Activated CD4-positive, alpha-beta T cell treated with anti-CD3 and anti-CD28 coated beads for 36 hours (primary cell): ENCODE measurements at regions of chr17 and their contacts with region 1.

Region 1: DNA sequence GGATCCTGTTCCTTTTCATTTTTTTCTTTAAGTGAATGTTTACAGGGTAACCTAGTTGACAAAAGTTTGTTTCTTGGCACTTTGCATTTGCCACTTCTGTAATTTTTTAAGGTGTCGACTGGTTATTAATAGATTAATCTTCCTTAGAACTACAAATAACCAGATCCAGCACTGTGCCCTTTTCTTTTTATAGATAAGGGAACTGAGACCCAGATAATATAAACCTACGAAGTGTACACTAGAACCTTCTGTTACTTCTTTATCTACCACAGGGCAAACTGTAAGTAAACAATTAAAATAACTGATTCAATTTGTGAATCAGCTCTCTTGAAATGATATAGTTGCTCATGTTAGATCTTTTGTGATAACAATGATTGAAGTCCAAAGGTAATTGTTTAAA is 55.4 kb downstream of the NLK start:
- DNase-seq: no peak
- ATAC-seq: no peak
- H3K4me3 Mint-ChIP-seq: no peak overlapping the region
- H3K27ac Mint-ChIP-seq: no peak overlapping the region
- H3K4me1 Mint-ChIP-seq: no peaks in the 10 kb centered on the region
- H3K27me3 Mint-ChIP-seq: no peaks in the 10 kb centered on the region

Region 2: DNA sequence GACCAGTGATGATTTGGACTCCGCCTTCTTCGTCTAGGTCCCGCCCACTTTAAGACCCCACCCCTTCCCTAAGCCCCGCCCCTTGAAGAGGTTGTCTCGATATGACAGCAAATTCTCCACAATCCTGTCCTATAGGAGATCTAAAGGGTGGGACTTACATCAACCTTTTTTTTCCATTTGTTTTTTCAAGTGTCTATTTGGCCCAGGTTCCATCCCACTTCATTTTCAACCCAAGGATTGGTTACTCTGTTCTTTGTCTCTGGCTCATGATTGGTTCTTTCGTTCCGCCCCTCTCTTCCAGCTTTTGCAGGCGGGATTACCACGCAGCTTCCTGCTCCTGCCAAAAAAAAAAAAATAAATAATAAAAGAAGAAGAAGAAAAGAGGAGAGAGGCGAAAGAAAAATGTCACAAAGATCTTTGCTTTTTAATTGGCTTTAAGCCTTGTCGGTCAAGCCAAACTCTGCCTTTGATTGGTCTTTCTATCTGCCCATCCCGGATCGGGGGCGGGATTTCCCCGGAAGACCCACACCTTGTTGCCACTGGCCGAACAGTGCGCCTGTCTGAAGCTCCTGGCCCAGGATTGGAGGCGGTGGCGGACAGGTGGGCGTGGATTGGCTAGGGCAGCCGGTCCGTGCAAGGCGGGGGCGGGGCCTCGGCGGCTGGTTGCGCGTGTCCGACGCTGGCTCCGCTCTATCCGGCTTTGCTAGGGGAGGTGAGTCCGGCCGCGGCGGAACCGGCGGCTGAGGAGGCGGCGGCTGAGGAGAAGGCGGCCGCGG is 56.6 kb before region 1 on chr17:
- CTCF ChIA-PET with region 1: no interaction called
- POLR2A ChIA-PET with region 1: no interaction called
- intact Hi-C with region 1: loop called in 1 of 2 experiments (anchors 10 kb)
- DNase-seq: peak; percentile 100
- ATAC-seq: peak; percentile 96
- H3K4me3 Mint-ChIP-seq: peak overlapping the region; percentile 79
- H3K27ac Mint-ChIP-seq: peak overlapping the region; percentile 74
- H3K4me1 Mint-ChIP-seq: peaks cover 52% of the 10 kb centered on the region
- H3K27me3 Mint-ChIP-seq: no peaks in the 10 kb centered on the region

Region 3: DNA sequence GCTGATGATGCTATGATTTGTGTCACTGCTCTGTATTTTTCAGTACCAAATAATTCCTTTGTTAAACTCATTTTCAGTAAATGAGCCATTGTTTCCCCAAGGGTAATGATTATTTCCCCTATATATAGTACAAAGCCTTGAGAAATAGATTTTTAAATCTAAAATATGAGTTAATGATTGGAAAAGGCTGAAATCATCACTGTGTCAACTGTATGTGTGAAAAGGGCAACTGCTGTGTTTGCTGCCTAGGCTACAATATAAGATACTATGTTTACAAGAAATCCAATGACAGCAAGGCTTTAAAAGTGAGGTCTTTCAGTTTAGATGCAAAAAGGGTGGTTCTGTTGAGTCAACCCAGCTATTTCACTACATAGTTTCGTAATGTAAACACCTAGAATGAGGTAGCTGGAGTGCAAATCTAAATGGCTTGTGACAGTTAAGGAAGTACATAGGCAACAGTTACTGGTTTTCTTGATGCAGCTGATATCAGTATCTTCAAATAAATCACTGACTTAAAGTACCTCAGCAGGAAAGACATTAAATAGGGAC is 40.1 kb before region 1 on chr17:
- CTCF ChIA-PET with region 1: no interaction called
- POLR2A ChIA-PET with region 1: no interaction called
- intact Hi-C with region 1: no loop called
- DNase-seq: no peak
- ATAC-seq: peak; percentile 92
- H3K4me3 Mint-ChIP-seq: no peak overlapping the region
- H3K27ac Mint-ChIP-seq: no peak overlapping the region
- H3K4me1 Mint-ChIP-seq: peaks cover 35% of the 10 kb centered on the region
- H3K27me3 Mint-ChIP-seq: no peaks in the 10 kb centered on the region

Region 4: DNA sequence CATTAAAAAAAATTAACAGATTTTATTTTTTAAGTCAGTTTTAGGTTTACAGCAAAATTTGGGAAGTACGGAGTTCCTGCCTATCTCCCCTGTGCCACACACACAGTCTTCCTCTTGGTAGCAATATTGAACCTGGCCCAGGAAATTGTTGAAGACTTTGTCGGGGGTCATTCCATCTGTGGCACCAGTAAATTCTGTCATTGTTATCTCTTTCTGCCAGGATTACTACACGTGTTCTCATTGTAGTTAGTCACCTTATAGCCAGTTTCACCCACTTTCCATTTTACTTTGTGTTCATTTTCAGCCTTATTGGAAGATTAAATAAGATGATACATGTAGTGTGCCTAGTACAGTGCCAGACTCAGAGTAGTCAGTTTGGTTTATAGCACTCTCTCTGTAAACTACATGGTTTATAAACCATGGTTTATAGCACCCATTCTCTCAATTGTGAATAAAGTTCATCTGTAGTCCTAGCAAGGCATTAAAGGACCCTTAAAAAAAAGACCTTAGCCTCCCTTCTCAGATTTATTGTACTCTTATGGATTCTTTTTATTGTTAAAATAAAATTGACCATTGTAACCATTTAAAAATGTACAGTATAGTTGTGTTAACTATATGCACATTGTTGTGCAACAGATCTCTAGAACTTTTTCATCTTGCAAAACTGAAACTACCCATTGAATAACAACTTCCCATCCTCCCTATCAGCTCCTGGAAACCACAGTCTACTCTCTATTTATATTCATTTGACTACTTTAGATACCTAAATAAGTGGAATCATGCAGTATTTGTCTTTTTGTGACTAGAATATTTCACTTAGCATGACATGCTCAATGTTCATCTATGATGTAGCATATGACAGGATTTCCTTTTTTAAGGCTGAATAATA is 19.3 kb before region 1 on chr17:
- CTCF ChIA-PET with region 1: interaction called, 4 read pairs
- POLR2A ChIA-PET with region 1: no interaction called
- intact Hi-C with region 1: loop called in 1 of 2 experiments (anchors 2 kb)
- DNase-seq: no peak
- ATAC-seq: peak; percentile 36
- H3K4me3 Mint-ChIP-seq: no peak overlapping the region
- H3K27ac Mint-ChIP-seq: no peak overlapping the region
- H3K4me1 Mint-ChIP-seq: peaks cover 44% of the 10 kb centered on the region
- H3K27me3 Mint-ChIP-seq: no peaks in the 10 kb centered on the region

Region 5: DNA sequence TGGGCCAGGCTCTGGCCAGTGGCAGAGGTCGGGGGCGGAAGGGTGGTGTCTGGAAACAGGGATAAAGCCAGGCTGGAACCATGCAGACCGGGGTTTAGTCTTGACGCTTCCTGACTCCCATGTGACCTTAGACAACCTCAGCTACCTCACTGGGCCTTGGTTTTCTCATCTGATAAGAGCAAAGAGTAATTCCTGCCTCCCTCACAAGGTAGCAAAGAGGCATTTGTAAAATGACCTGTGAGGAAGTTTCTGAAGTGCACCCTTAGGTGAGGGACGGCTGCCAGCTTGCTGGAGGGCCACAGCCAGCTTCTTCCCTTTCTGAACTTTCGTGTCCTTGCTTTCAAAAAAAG is 143.1 kb after region 1 on chr17:
- CTCF ChIA-PET with region 1: no interaction called
- POLR2A ChIA-PET with region 1: no interaction called
- intact Hi-C with region 1: no loop called
- DNase-seq: no peak
- ATAC-seq: no peak
- H3K4me3 Mint-ChIP-seq: no peak overlapping the region
- H3K27ac Mint-ChIP-seq: no peak overlapping the region
- H3K4me1 Mint-ChIP-seq: no peaks in the 10 kb centered on the region
- H3K27me3 Mint-ChIP-seq: peaks cover 2% of the 10 kb centered on the region